Aorta (tissue), 5 donors: ENCODE measurements at regions of chr3 and their contacts with region 1.

Region 1: GRCh38 chr3:128170805-128171516 is 17.7 kb downstream of the EEFSEC start:
- DNase-seq: no peak
- ATAC-seq: peak; percentile 78
- H3K4me3 ChIP-seq: no peak overlapping the region
- H3K27ac ChIP-seq: no peak overlapping the region
- H3K4me1 ChIP-seq: no peaks in the 10 kb centered on the region
- H3K27me3 ChIP-seq: no peaks in the 10 kb centered on the region

Region 2: GRCh38 chr3:128322066-128323022 is 151.4 kb after region 1 on chr3:
- intact Hi-C with region 1: loop called in 1 of 2 experiments (anchors 5 kb)
- DNase-seq: peak; percentile 63 to 79
- ATAC-seq: no peak
- H3K4me3 ChIP-seq: no peak overlapping the region
- H3K27ac ChIP-seq: no peak overlapping the region
- H3K4me1 ChIP-seq: no peaks in the 10 kb centered on the region
- H3K27me3 ChIP-seq: no peaks in the 10 kb centered on the region

Region 3: DNA sequence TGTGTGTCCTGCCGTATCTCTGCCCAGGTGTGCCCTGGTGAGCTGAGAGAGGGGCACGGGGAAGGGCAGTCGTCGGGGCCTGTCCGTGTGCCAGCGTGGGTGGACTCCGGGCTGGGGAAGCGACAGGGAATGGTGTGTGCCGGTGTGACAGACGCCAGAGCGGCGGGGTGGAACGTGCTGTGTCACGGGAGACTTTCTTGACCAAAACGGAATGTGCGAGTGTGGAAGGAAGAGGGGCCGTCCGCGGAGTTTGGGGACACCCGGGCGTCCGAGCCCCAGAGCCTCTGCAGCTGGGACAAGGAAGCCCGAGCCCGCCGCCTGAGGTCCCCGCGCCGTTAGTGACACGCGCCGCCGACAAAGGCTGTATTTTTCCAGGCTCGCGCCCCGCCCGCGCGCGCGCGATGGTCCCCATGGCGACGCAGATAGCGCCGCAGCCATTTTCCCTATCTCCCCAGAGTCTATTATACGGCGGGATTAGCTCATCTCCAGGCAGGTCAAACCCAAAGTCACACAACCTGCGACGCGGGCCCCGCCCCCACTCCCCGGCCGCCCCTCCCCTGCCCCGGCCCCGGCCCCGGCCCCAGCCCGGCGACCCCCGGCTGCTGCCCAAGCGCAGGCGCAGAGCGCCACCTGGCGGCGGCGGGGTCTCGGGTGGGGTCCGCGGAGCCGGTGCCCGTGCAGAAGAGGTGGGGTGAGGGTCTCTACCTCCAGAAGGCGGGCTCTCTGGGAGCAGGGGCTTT is 326.6 kb after region 1 on chr3:
- intact Hi-C with region 1: loop called in 1 of 2 experiments (anchors 5 kb)
- DNase-seq: peak in 1 of 2 donors; percentile 90
- ATAC-seq: peak; percentile 63
- H3K4me3 ChIP-seq: peak overlapping the region; percentile 32 to 77
- H3K27ac ChIP-seq: no peak overlapping the region
- H3K4me1 ChIP-seq: no peaks in the 10 kb centered on the region
- H3K27me3 ChIP-seq: no peaks in the 10 kb centered on the region

Region 4: DNA sequence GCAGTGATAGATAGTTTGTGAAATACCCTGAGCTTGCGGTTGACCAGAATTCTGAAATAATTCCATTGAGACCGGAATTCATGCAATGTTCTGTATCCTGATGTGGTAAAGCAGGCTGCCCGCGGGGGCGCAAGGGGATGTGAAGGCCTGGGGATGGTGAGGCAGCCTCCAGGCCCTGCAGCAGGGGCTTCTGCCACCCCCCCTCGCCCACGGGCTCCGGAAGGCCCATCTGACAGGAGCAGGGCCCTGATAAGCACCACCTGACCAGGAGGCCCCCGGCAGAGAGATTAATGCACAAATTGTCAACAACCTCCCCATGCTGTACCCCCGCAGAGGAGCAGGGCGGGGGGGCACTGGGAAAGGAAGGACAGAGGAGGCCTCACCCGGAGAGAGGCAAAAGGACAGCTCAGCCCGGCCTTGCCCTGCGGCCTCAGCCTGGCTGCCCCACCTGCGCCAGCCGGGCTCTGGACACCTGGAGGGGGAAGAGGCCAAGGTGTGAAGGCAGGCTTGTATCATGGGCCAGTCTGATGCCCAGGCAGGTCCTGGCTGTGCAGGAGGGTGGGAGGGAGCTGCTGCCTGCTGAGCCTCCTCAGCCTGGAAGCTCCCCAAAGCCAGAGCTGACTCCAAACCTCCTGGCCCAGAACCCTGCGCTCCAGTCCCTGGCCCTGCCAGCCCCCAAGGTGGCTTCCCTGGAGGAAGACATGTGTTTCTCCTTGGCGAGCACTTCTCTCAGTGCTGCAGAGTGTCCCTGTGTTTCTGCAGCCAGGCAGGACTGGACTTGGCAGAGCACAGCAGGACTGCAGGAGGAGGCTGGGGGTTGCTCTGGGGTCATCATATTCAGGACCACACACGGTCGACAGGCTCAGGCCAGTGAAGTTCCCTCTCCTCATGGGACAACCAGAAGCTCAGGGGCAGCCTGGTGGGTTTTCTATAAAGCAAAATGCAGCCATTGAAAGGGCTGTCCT is 433.1 kb after region 1 on chr3:
- intact Hi-C with region 1: loop called in 1 of 2 experiments (anchors 10 kb)
- DNase-seq: no peak
- ATAC-seq: no peak
- H3K4me3 ChIP-seq: no peak overlapping the region
- H3K27ac ChIP-seq: no peak overlapping the region
- H3K4me1 ChIP-seq: no peaks in the 10 kb centered on the region
- H3K27me3 ChIP-seq: no peaks in the 10 kb centered on the region